Posterior cingulate gyrus (tissue), 11 donors: ENCODE measurements at regions of chr11 and their contacts with region 1.

Region 1: GRCh38 chr11:131246663-131247062 is 123.8 kb upstream of the NTM start:
- DNase-seq: peak; percentile 31 to 96 (median 78)

Region 2: GRCh38 chr11:131370090-131370751 is 123.6 kb after region 1 on chr11 and contains the start of gene NTM:
- intact Hi-C with region 1: loop called (anchors 10 kb)
- DNase-seq: peak; percentile 55 to 95 (median 66)

Region 3: GRCh38 chr11:131486100-131486499 is 239.4 kb after region 1 on chr11:
- intact Hi-C with region 1: no loop called
- DNase-seq: peak in 5 of 10 donors; percentile 34 to 89 (median 46)

Region 4: GRCh38 chr11:131504199-131504949 is 257.7 kb after region 1 on chr11:
- intact Hi-C with region 1: loop called (anchors 5 kb)
- DNase-seq: peak; percentile 66 to 96 (median 74)